ENCODE measurements at regions of chr7 and their contacts with region 1.

Region 1: GRCh38 chr7:66591799-66592596 is 36.7 kb upstream of the KCTD7 start:
- DNase-seq: peak; percentile 90
- ATAC-seq: peak; percentile 98
- H3K4me3 ChIP-seq: peak overlapping the region; percentile 47 to 94 (median 81)
- H3K4me3 Mint-ChIP-seq: peak overlapping the region; percentile 100
- H3K27ac ChIP-seq: peak overlapping the region; percentile 42 to 87
- H3K27ac Mint-ChIP-seq: peak overlapping the region; percentile 99
- H3K4me1 ChIP-seq: peaks cover 13 to 27% of the 10 kb centered on the region in 2 donors
- H3K4me1 Mint-ChIP-seq: peaks cover 47% of the 10 kb centered on the region
- H3K27me3 ChIP-seq: no peaks in the 10 kb centered on the region
- H3K27me3 Mint-ChIP-seq: no peaks in the 10 kb centered on the region
- CTCF ChIP-seq: no peak

Region 2: DNA sequence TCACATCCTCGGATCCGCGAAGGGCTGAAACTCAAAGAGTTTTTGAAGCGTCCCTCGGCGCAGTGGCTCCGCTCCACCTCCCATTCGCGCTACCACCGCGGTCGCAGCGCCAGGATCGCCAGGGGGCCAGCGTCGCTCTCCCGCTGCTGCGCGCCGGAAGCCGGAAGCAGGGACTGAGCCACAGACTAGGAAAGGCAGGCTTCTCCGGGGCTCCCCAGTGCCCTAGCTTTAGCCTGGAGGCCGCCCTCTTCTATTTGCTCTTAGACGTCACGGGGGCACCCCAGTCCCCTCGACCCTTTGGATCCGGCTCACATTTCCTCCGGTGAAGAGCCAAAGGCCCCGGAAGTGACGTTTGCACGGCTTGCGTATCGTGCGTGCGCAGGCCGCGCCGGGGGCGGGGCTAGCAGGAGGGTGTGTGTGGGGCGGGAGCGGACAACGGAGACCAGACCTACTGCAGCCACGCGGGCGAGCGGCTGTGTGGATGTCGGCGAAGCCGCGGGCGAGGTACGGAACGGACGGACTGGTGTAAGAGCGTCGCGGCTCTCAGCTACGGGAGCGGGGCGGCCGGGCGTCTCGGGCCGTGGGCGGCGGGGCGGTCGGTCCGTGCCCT is 62.2 kb after region 1 on chr7:
- CTCF ChIA-PET with region 1: no interaction called
- POLR2A ChIA-PET with region 1: no interaction called
- intact Hi-C with region 1: loop called (anchors 1 kb)
- DNase-seq: peak; percentile 99
- ATAC-seq: peak; percentile 92
- H3K4me3 ChIP-seq: peak overlapping the region; percentile 54 to 86 (median 83)
- H3K4me3 Mint-ChIP-seq: peak overlapping the region; percentile 98
- H3K27ac ChIP-seq: peak overlapping the region; percentile 82 to 98
- H3K27ac Mint-ChIP-seq: peak overlapping the region; percentile 99
- H3K4me1 ChIP-seq: peaks cover 9 to 16% of the 10 kb centered on the region in 2 donors
- H3K4me1 Mint-ChIP-seq: peaks cover 24% of the 10 kb centered on the region
- H3K27me3 ChIP-seq: no peaks in the 10 kb centered on the region
- H3K27me3 Mint-ChIP-seq: no peaks in the 10 kb centered on the region
- CTCF ChIP-seq: no peak

Measured in B cell (primary cell).